Common myeloid progenitor, CD34-positive (primary cell): ENCODE measurements at regions of chr11 and their contacts with region 1.

Region 1: DNA sequence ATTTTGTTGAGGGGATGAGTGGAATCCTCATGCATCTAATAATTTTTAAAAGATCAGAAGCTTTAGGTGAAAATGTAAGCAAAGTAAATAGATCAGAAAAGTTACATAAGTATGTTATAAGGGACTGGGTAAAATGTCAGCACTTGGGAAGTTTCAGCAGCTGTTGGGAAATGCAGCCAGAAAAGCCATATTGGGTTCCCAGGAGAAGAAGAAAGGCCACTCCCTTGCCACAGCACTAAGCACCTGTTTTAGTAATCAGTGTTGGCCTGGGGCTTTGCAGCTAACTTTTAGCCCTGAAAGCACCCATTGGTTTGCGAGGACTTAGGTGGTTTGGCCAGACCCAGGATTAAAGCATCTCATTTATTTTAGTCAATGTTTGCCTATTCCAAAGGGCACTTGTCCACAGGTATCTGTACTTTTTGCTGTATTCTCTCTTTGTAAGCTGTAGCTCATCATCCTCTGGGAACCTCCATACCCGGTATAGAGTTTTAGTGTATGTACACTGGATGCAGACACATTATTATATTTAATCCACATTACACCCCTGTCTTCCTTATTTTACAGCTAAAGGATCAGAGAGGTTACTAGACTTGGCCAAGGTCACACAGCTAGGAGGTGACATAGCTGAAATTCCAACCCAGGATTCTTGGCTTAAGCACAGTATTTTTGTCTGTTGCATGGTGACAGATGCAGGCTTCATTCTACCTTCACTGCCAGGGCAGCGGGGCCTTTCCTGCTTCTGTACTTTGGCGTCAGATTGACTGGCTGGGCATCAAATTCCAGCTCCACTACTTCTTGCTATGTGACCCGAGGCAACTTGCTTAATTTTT is 127.7 kb upstream of the SESN3 start:
- DNase-seq: no peak
- H3K4me3 ChIP-seq: no peak overlapping the region
- H3K27ac ChIP-seq: no peak overlapping the region
- H3K4me1 ChIP-seq: peaks cover 0 to 4% (median 1%) of the 10 kb centered on the region in 4 experiments
- H3K27me3 ChIP-seq: no peaks in the 10 kb centered on the region

Region 2: DNA sequence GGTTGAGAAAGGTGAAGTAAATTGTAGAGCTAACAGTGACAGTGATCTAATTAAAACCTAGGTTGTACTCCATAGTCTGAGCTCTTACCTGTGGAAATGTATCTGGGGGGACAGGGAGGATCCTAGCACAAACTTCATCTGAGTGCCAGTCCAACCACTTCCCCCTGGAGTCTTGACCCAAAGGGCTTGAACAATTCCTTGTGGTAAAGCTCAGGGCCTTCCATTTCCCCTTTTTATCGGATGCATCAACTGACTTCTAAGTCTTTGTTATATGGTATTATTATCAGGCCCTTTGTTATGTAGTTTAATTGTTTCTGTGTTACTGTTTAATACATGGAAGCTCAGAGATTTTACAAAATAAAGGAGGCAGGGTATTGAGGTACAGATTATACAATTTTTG is 12.4 kb after region 1 on chr11:
- CTCF ChIA-PET with region 1: interaction called, 12 read pairs
- POLR2A ChIA-PET with region 1: no interaction called
- DNase-seq: peak; percentile 27 to 73 (median 63)
- H3K4me3 ChIP-seq: no peak overlapping the region
- H3K27ac ChIP-seq: no peak overlapping the region
- H3K4me1 ChIP-seq: peaks cover 5 to 24% (median 14%) of the 10 kb centered on the region in 4 experiments
- H3K27me3 ChIP-seq: no peaks in the 10 kb centered on the region